ENCODE measurements at regions of chr17 and their contacts with region 1.

Region 1: DNA sequence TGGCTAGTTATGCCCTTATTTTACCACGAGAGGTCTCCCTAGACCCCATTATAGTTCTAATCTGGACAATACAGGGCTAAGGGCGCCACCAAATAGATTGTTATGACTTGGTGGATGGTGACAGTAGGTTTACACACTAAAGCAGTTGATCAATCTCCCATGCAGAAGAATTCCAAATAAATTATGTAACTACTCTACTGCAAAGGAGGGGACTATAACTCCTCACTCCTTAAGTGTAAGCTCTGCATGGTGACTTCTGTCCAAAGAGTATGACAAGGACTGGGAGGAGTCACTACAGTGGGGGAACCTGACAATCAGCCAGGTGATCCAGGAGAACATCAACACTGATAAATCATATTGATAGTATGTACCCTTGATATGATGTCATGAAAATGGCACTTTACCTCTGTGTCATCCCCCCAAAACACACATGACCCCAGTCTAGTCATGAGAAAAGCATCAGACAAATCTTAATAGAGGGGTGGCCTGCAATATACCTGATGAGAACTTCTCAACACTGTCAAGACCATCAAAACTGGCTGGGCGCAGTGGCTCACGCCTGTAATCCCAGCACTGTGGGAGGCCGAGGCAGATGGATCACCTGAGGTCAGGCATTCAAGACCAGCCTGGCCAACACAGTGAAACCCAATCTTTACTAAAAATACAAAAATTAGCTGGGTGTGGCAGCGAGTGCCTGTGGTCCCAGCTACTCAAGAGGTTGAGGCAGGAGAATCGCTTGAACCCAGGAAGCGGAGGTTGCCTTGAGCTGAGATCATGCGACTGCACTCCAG is 20.1 kb upstream of the YPEL2 start:
- DNase-seq: peak; percentile 37
- H3K4me3 ChIP-seq: no peak overlapping the region
- H3K27ac ChIP-seq: no peak overlapping the region
- H3K4me1 ChIP-seq: no peaks in the 10 kb centered on the region
- H3K27me3 ChIP-seq: no peaks in the 10 kb centered on the region
- CTCF ChIP-seq: peak; percentile 73

Region 2: DNA sequence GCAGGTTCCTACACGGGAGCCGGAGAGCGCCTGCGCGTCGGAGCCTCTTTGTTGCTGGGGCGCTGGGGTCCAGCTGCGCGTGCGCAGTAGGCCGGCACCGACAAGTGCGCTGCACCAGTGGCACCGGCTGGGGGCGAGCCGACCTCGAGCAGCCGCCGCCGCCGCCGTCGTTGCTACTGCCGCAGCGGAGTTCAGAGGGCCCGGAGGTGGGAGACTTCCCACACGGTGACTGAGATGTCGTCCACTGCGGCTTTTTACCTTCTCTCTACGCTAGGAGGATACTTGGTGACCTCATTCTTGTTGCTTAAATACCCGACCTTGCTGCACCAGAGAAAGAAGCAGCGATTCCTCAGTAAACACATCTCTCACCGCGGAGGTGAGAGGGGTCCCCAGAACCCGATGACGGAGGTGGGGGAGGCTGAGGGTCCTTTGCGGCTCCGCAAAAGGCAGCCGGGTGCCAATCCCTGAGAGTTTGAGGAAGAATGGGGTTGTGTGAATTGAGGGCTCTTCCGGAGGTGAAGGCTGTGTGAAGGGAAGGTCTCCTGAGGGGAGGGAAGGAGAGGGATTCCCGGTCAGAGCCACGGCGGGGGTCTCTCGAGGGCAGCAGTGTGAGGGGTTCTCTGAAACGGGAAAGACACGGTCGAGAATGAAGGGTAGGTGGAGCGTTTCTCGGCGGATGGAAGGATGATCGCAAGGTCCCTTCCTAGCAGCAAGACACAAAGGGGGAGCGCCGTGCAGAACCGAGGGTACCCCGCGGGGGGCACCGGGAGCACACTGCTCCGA is 90.8 kb before region 1 on chr17 and contains the start of gene GDPD1:
- CTCF ChIA-PET with region 1: no interaction called
- dilution Hi-C with region 1: no loop called
- in situ Hi-C with region 1: no loop called
- intact Hi-C with region 1: loop called (anchors 2 kb)
- DNase-seq: peak; percentile 86
- H3K4me3 ChIP-seq: peak within 1 kb of the TSS; percentile 76 to 90 (median 88)
- H3K27ac ChIP-seq: peak within 1 kb of the TSS; percentile 34
- H3K4me1 ChIP-seq: peaks cover 8% of the 10 kb centered on the region
- H3K27me3 ChIP-seq: no peaks in the 10 kb centered on the region
- CTCF ChIP-seq: peak; percentile 39 to 65
- total RNA-seq, gene GDPD1: 1.9 to 2.8 TPM

Region 3: DNA sequence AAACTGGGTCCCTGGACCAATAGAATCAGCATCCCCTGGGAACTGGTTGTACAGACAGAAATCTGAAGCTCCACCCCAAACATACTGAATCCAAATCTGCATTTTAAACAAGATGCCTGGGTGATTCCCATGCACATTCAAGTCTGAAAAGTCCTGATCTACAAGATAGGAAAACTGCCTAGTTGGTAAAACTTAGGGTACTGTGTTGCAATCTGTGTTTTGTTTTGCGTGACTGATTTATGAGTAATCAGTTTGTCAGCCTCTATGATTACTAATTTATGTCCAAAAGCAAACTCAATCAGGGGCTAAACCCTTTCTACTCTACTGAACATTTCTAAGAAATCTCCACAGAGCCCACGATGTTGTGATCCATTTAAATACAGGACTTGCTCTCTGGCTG is 123.9 kb after region 1 on chr17:
- CTCF ChIA-PET with region 1: interaction called, 5 read pairs
- dilution Hi-C with region 1: no loop called
- in situ Hi-C with region 1: loop called (anchors 5 kb)
- intact Hi-C with region 1: loop called (anchors 1 kb)
- DNase-seq: peak; percentile 91
- H3K4me3 ChIP-seq: no peak overlapping the region
- H3K27ac ChIP-seq: no peak overlapping the region
- H3K4me1 ChIP-seq: peaks cover 9% of the 10 kb centered on the region
- H3K27me3 ChIP-seq: no peaks in the 10 kb centered on the region
- CTCF ChIP-seq: no peak

Region 4: DNA sequence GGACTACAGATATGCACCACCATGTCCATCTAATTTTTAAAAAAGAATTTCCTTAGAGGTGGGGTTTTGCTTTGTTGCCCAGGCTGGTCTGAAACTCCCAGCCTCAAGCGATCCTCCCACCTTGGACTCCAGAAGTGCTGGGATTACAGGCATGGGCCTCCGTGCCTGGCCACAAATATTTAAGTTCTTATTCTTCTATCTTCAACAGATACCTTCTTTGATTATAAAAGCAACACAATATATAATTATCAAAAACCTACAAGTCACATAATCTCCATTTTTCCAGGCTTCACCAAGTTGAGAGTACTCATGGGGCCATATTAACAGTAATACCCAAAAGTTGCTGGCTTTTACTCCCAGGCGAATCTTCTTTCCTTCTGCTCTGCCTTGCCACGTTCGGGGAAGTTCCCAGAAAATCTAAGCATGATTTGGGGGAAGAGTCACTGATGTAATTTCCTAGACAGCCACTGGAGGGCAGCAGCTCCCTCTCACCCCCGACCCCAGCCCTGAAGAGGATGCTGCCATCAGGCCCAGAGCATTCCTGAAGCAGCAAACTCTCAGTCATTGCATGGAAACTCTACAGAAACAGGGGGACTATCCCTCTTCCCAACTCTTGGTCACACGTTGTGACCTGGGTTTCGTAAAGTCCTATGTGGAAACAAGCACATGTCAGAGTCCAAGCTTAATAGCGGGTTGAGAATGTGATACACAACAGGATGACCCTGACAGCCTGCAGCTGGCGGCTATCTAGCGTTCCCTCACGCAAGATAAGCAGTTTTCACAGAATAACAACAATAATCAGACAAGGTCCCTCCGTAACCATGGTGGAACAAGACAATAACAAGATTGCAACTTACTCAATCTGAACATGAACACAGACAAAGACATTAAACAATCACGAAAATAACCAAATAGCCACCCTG is 210.1 kb after region 1 on chr17:
- CTCF ChIA-PET with region 1: no interaction called
- dilution Hi-C with region 1: no loop called
- in situ Hi-C with region 1: no loop called
- intact Hi-C with region 1: loop called (anchors 2 kb)
- DNase-seq: peak; percentile 56
- H3K4me3 ChIP-seq: no peak overlapping the region
- H3K27ac ChIP-seq: no peak overlapping the region
- H3K4me1 ChIP-seq: no peaks in the 10 kb centered on the region
- H3K27me3 ChIP-seq: no peaks in the 10 kb centered on the region
- CTCF ChIP-seq: peak; percentile 88 to 91

Region 5: GRCh38 chr17:59565171-59565969 is 254.0 kb after region 1 on chr17 and contains the start of gene DHX40:
- CTCF ChIA-PET with region 1: no interaction called
- dilution Hi-C with region 1: no loop called
- in situ Hi-C with region 1: loop called in 1 of 2 experiments (anchors 25 kb)
- intact Hi-C with region 1: no loop called
- DNase-seq: peak; percentile 83
- H3K4me3 ChIP-seq: peak within 1 kb of the TSS; percentile 93 to 98 (median 95)
- H3K27ac ChIP-seq: peak within 1 kb of the TSS; percentile 87
- H3K4me1 ChIP-seq: peaks cover 9% of the 10 kb centered on the region
- H3K27me3 ChIP-seq: no peaks in the 10 kb centered on the region
- CTCF ChIP-seq: no peak
- total RNA-seq, gene DHX40: 22.5 to 42.7 TPM

Region 6: DNA sequence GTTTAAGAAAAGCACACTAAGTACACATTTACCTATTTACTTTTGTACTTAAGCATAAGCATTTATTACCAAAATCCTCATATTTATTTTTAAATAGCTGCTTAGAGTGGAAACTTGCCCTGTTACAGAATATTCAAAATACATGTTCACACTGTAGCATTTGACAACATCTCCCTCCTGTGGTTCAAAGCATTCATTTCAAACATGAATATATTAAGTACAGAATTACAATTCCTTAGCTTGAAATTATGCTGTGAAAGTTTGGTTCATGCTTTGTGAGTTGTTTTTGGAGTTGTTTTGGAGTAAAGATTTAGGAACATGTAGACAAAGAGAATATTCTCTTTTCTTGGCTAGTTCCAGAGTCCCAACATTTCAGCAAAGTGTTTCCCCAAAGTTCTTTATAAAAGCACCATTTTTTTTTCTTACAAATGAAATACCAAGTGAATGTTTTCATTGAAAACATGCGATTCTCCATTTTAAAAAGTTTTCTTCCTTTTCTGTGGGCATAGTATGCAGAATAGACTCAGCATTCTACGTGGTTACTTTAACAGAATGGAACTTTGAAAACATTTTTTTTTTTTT is 548.2 kb after region 1 on chr17:
- CTCF ChIA-PET with region 1: no interaction called
- dilution Hi-C with region 1: no loop called
- in situ Hi-C with region 1: no loop called
- intact Hi-C with region 1: loop called (anchors 2 kb)
- DNase-seq: no peak
- H3K4me3 ChIP-seq: no peak overlapping the region
- H3K27ac ChIP-seq: no peak overlapping the region
- H3K4me1 ChIP-seq: no peaks in the 10 kb centered on the region
- H3K27me3 ChIP-seq: no peaks in the 10 kb centered on the region
- CTCF ChIP-seq: peak; percentile 43 to 59